Activated CD4-positive, alpha-beta T cell treated with anti-CD3 and anti-CD28 coated beads for 36 hours (primary cell): ENCODE measurements at regions of chr2 and their contacts with region 1.

Region 1: GRCh38 chr2:196750982-196751635 is 48.4 kb downstream of the GTF3C3 start:
- DNase-seq: peak; percentile 82
- ATAC-seq: peak; percentile 95
- H3K4me3 Mint-ChIP-seq: no peak overlapping the region
- H3K27ac Mint-ChIP-seq: no peak overlapping the region
- H3K4me1 Mint-ChIP-seq: peaks cover 7% of the 10 kb centered on the region
- H3K27me3 Mint-ChIP-seq: no peaks in the 10 kb centered on the region

Region 2: DNA sequence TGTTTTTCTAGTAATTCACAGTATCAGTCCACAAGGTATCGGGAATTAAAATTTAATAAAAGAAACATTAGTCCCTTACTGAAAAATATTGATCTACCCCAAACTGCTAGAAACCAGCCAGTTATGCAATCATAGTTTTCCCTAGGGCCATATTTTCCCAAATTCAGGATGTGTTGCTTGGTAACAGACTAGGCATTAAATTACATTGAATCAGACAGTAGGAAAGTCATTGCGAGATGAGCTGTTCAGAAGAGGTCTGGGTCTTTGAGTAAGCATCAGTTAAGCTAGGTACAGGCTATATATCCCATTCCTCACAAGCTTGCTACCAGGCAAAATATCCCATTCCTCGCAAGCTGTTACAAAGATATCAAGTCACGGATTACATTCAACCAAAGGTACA is 234.5 kb before region 1 on chr2:
- CTCF ChIA-PET with region 1: no interaction called
- POLR2A ChIA-PET with region 1: no interaction called
- intact Hi-C with region 1: no loop called
- DNase-seq: no peak
- ATAC-seq: no peak
- H3K4me3 Mint-ChIP-seq: no peak overlapping the region
- H3K27ac Mint-ChIP-seq: no peak overlapping the region
- H3K4me1 Mint-ChIP-seq: no peaks in the 10 kb centered on the region
- H3K27me3 Mint-ChIP-seq: no peaks in the 10 kb centered on the region

Region 3: DNA sequence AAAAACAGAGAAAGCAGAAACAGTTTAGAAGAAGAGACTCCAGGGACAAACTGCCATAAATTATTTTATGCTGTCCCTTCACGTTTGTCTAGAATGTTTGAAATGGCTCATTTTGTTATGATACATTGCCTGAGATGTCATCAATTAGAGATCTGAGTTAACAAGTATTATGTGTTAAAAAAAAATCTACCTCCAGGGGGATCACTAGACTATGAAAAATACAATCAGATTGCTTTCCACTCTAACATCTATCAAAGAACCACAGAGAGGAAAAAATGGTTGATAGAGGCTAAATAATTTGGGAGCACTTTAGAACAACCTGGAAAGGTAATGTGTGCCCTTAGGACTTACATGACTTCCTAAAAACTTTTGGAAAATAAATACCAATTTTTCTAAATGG is 215.4 kb before region 1 on chr2:
- CTCF ChIA-PET with region 1: no interaction called
- POLR2A ChIA-PET with region 1: no interaction called
- intact Hi-C with region 1: no loop called
- DNase-seq: no peak
- ATAC-seq: no peak
- H3K4me3 Mint-ChIP-seq: no peak overlapping the region
- H3K27ac Mint-ChIP-seq: no peak overlapping the region
- H3K4me1 Mint-ChIP-seq: no peaks in the 10 kb centered on the region
- H3K27me3 Mint-ChIP-seq: peaks cover 7% of the 10 kb centered on the region

Region 4: DNA sequence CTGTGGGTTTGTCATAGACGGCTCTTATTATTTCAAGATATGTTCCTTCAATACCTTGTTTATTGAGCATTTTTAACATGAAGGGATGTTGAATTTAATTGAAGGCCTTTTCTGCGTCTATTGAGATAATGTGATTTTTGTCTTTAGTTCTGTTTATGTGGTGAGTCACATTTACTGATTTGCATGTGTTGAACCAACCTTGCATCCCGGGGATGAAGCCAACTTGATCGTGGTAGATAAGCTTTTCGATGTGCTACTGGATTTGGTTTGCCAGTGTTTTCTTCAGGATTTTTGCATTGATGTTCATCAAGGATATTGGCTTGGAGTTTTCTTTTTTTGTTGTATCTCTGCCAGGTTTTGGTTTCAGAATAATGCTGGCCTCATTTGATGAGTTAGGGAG is 12.1 kb before region 1 on chr2:
- CTCF ChIA-PET with region 1: interaction called, 14 read pairs
- POLR2A ChIA-PET with region 1: no interaction called
- intact Hi-C with region 1: no loop called
- DNase-seq: no peak
- ATAC-seq: no peak
- H3K4me3 Mint-ChIP-seq: no peak overlapping the region
- H3K27ac Mint-ChIP-seq: no peak overlapping the region
- H3K4me1 Mint-ChIP-seq: no peaks in the 10 kb centered on the region
- H3K27me3 Mint-ChIP-seq: no peaks in the 10 kb centered on the region

Region 5: DNA sequence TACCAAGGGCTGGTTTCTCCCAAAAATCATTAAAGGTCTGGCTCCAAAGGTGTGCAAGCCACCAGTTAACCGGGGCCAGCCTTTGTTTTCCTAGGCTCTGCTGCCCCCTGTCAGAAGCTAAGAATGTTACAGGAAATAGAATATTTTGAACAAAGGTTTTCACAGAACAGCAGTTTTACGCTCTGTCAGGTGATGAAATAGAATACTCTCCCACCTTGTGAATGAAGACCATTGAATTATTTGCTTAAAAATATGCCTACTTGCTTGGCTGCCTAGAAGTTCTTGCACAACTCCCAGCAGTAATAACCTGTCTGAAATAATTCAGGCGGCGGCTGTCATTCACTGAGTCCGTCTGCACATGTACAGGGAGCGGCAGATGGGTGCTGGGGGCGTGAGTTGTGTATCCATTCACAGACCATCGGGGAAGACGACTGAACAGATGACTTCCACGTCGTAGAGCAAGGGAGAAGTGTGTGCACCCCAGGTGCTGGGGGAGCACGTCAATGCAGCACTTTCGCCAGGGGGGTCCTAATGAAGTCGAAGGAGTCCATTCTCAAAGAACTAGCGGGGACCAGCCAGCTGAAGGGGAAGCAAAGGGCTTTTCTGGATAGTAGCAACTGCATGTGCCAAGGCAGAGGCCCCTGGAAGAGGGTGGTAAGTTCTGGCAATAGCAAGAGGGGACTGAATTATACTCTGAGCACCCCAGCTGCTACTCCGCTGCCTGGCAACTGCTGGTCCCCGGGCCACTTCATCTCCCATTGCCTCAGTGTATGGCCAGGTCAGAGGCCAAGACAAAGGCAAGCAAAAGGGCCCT is 627.6 kb after region 1 on chr2:
- CTCF ChIA-PET with region 1: no interaction called
- POLR2A ChIA-PET with region 1: no interaction called
- intact Hi-C with region 1: loop called (anchors 1 to 2 kb)
- DNase-seq: peak; percentile 80
- ATAC-seq: peak; percentile 83
- H3K4me3 Mint-ChIP-seq: no peak overlapping the region
- H3K27ac Mint-ChIP-seq: no peak overlapping the region
- H3K4me1 Mint-ChIP-seq: peaks cover 19% of the 10 kb centered on the region
- H3K27me3 Mint-ChIP-seq: no peaks in the 10 kb centered on the region